ENCODE measurements at regions of chr4 and their contacts with region 1.

Region 1: GRCh38 chr4:183636923-183637322 is 22.1 kb downstream of the RWDD4 start:
- DNase-seq: peak; percentile 57
- H3K4me3 ChIP-seq: peak overlapping the region in 2 of 3 experiments; percentile 15 to 49
- H3K27ac ChIP-seq: peak overlapping the region; percentile 20
- H3K4me1 ChIP-seq: peaks cover 11% of the 10 kb centered on the region
- H3K27me3 ChIP-seq: no peaks in the 10 kb centered on the region
- CTCF ChIP-seq: no peak
- POLR2A ChIP-seq: no peak

Region 2: GRCh38 chr4:183659029-183659871 is 22.3 kb after region 1 on chr4 and contains the starts of genes RWDD4 and TRAPPC11:
- CTCF ChIA-PET with region 1: no interaction called
- POLR2A ChIA-PET with region 1: no interaction called
- dilution Hi-C with region 1: no loop called
- intact Hi-C with region 1: loop called (anchors 1 kb)
- DNase-seq: peak; percentile 99
- H3K4me3 ChIP-seq: peak within 1 kb of the TSS; percentile 51 to 69 (median 64)
- H3K27ac ChIP-seq: peak within 1 kb of the TSS; percentile 58
- H3K4me1 ChIP-seq: peaks cover 13% of the 10 kb centered on the region
- H3K27me3 ChIP-seq: no peaks in the 10 kb centered on the region
- CTCF ChIP-seq: peak in 1 of 2 donors; percentile 13
- POLR2A ChIP-seq: peak; percentile 53
- total RNA-seq, gene RWDD4: 16.6 and 16.8 TPM in 2 replicates
- total RNA-seq, gene TRAPPC11: 29.7 and 32.1 TPM in 2 replicates